IMR-90 (cell line): ENCODE measurements at regions of chr11 and their contacts with region 1.

Region 1: GRCh38 chr11:72238040-72238450 is 5.9 kb downstream of the PHOX2A start:
- DNase-seq: peak; percentile 67
- ATAC-seq: peak; percentile 50
- H3K4me3 ChIP-seq: no peak overlapping the region
- H3K27ac ChIP-seq: no peak overlapping the region
- H3K4me1 ChIP-seq: peaks cover 2% of the 10 kb centered on the region; the same call in 1 of the 2 replicates
- H3K27me3 ChIP-seq: peaks cover 28% of the 10 kb centered on the region
- CTCF ChIP-seq: peak; percentile 66
- POLR2A ChIP-seq: no peak
- RAD21 ChIP-seq: peak; percentile 71

Region 2: GRCh38 chr11:72352859-72353551 is 115.0 kb after region 1 on chr11:
- CTCF ChIA-PET with region 1: interaction called, 3 read pairs
- POLR2A ChIA-PET with region 1: no interaction called
- dilution Hi-C with region 1: no loop called
- in situ Hi-C with region 1: no loop called
- intact Hi-C with region 1: loop called (anchors 2 kb)
- DNase-seq: peak; percentile 85
- ATAC-seq: peak; percentile 96
- H3K4me3 ChIP-seq: no peak overlapping the region
- H3K27ac ChIP-seq: no peak overlapping the region
- H3K4me1 ChIP-seq: peaks cover 12% of the 10 kb centered on the region
- H3K27me3 ChIP-seq: no peaks in the 10 kb centered on the region
- CTCF ChIP-seq: peak; percentile 69
- POLR2A ChIP-seq: no peak
- RAD21 ChIP-seq: peak; percentile 85

Region 3: GRCh38 chr11:72413914-72414628 is 176.0 kb after region 1 on chr11:
- CTCF ChIA-PET with region 1: no interaction called
- POLR2A ChIA-PET with region 1: no interaction called
- dilution Hi-C with region 1: no loop called
- in situ Hi-C with region 1: no loop called
- intact Hi-C with region 1: loop called (anchors 1 kb)
- DNase-seq: peak; percentile 76
- ATAC-seq: peak; percentile 90
- H3K4me3 ChIP-seq: no peak overlapping the region
- H3K27ac ChIP-seq: no peak overlapping the region
- H3K4me1 ChIP-seq: peaks cover 4% of the 10 kb centered on the region; the same call in 1 of the 2 replicates
- H3K27me3 ChIP-seq: no peaks in the 10 kb centered on the region
- CTCF ChIP-seq: peak; percentile 87
- POLR2A ChIP-seq: no peak
- RAD21 ChIP-seq: peak; percentile 84